ENCODE measurements at regions of chr7 and their contacts with region 1.

Region 1: DNA sequence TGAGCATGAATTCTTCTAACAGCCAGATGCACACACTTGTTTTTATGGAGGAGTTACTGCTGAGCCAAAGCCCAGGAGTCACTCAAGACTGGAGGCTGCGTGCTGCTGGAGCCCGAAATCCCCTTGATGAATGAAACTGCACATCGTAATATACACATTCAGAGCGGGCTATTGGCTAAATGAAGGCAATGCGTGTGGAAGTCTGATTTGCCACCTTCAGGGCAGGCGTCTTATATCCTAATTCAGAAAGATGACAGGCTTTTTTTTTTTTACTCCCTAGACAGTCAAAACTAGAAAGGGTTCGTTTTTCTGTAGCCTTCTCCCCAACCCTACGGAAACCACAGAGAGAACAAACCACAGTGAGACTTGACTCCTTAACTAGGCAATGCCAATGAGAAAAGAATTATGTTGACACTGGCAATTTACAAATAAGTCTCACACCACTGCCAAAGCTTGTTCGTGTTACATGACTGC is 227.2 kb upstream of the KLF14 start:
- DNase-seq: peak; percentile 96
- H3K4me3 ChIP-seq: peak overlapping the region; percentile 41 to 96 (median 75)
- H3K27ac ChIP-seq: peak overlapping the region; percentile 100
- H3K4me1 ChIP-seq: peaks cover 34% of the 10 kb centered on the region
- H3K27me3 ChIP-seq: no peaks in the 10 kb centered on the region
- CTCF ChIP-seq: no peak

Region 2: DNA sequence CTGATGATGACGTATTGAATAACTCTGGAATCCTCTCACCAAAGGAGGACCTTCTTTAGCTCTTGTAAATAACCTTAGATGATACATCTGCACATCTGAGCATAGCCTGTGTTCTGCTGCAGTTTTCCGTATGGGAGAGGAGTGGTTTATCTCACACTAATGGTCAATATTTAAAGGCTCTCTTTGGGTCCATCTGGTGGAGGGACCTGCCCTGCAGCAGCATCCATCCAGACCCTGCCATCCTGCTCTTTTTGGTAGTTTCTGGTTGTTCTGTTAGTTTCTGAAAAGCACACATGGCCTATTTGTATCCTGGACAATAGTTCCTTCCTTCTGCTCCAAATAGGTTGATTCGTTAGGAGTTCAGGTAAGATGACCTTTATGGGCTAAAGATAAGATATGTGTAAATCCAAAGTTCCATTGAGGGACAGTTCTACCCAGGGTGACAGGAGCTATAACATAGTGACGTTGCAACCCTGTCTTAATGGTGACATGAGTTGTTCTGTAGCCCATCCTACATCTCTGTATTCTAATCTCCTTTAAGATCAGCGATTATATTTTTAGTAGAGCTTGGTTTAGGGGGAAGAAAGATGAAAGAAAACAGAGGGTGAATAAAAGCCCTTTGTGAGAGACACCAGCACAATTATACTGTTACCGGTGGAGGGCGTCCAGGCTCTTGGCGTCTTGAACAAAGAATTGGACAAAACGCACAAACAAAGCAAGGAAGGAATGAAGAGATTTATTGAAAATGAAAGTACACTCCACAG is 167.1 kb before region 1 on chr7:
- CTCF ChIA-PET with region 1: no interaction called
- dilution Hi-C with region 1: no loop called
- in situ Hi-C with region 1: no loop called
- intact Hi-C with region 1: no loop called
- DNase-seq: peak; percentile 48
- H3K4me3 ChIP-seq: peak overlapping the region; percentile 3 to 42 (median 41)
- H3K27ac ChIP-seq: peak overlapping the region; percentile 36
- H3K4me1 ChIP-seq: peaks cover 4% of the 10 kb centered on the region
- H3K27me3 ChIP-seq: no peaks in the 10 kb centered on the region
- CTCF ChIP-seq: peak in 1 of 2 donors; percentile 42

Region 3: DNA sequence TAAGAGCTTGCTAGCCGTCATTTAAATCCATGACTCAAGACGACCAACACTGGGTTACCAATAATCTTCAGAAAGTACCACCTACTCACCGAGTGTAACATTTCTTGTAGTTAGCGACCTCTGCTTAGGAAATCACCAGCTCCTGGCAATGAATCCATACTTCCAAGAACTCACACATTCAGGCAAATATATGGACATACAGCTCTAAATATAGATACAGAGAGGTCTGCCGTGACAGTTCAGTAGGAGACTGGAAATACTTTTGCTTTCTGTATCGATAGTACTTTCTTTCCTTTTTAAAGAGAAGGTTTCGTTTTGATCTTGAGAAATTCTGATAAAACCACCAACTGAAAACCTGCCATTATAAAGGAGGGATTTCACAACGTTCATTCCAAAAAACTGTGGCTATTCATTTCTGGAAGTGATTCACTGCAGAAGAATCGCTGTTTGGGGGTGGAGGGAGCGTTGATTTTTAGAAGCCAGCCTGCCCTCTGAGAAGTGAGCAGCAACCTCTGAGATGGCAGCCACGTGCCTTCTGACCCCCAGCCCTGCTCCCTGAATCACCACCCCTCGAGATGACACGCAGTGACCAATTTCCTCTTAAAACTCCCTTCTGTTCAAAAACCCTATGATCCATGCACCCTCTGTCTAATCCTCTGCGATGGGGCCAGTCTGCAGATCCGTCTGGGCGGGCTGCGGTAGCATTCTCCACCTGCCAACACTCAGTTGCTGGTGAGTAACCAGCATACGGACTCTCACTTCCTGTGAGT is 48.1 kb before region 1 on chr7:
- CTCF ChIA-PET with region 1: no interaction called
- dilution Hi-C with region 1: loop called (anchors 5 kb)
- in situ Hi-C with region 1: loop called in 1 of 2 experiments (anchors 5 kb)
- intact Hi-C with region 1: loop called (anchors 1 kb)
- DNase-seq: peak; percentile 99
- H3K4me3 ChIP-seq: peak overlapping the region; percentile 50 to 96 (median 90)
- H3K27ac ChIP-seq: peak overlapping the region; percentile 97
- H3K4me1 ChIP-seq: peaks cover 61% of the 10 kb centered on the region
- H3K27me3 ChIP-seq: no peaks in the 10 kb centered on the region
- CTCF ChIP-seq: no peak

Region 4: GRCh38 chr7:130996841-130997231 is 35.7 kb after region 1 on chr7:
- CTCF ChIA-PET with region 1: no interaction called
- dilution Hi-C with region 1: loop called (anchors 5 kb)
- in situ Hi-C with region 1: no loop called
- intact Hi-C with region 1: loop called (anchors 2 kb)
- DNase-seq: peak; percentile 85
- H3K4me3 ChIP-seq: no peak overlapping the region
- H3K27ac ChIP-seq: peak overlapping the region; percentile 97
- H3K4me1 ChIP-seq: peaks cover 69% of the 10 kb centered on the region
- H3K27me3 ChIP-seq: no peaks in the 10 kb centered on the region
- CTCF ChIP-seq: no peak

Region 5: GRCh38 chr7:131027287-131027773 is 66.2 kb after region 1 on chr7:
- CTCF ChIA-PET with region 1: no interaction called
- dilution Hi-C with region 1: no loop called
- in situ Hi-C with region 1: no loop called
- intact Hi-C with region 1: loop called (anchors 1 kb)
- DNase-seq: peak; percentile 63
- H3K4me3 ChIP-seq: no peak overlapping the region
- H3K27ac ChIP-seq: peak overlapping the region; percentile 89
- H3K4me1 ChIP-seq: peaks cover 20% of the 10 kb centered on the region
- H3K27me3 ChIP-seq: no peaks in the 10 kb centered on the region
- CTCF ChIP-seq: no peak